Dorsolateral prefrontal cortex (tissue), 120 donors: ENCODE measurements at regions of chr14 and their contacts with region 1.

Region 1: DNA sequence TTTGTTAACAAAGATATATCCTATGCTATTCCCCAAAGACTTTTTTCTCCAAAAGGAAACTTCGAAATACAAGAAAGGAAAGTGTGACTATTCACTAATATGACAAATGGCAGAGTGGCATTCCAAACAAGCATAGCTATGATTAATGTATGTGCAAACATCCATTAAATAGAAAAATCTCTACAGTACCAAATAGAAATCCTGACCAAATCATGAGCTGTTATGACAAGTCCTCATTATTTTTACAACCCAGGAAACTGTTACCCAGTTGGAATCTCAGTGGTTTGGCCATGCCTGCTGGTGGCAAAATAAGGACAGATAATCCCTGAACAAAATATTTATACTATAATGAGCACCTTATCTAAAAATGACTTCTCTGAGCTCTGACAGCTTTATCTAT is 202.1 kb downstream of the SEC23A start:
- DNase-seq: no peak
- H3K4me3 ChIP-seq: no peak overlapping the region
- H3K27ac ChIP-seq: no peak overlapping the region
- H3K27me3 ChIP-seq: no peaks in the 10 kb centered on the region
- CTCF ChIP-seq: no peak

Region 2: GRCh38 chr14:38931969-38932652 is 31.2 kb after region 1 on chr14:
- intact Hi-C with region 1: loop called in 1 of 2 experiments (anchors 5 kb)
- DNase-seq: no peak
- H3K4me3 ChIP-seq: no peak overlapping the region
- H3K27ac ChIP-seq: peak overlapping the region in 21 of 59 donors; percentile 11 to 61 (median 32)
- H3K27me3 ChIP-seq: no peaks in the 10 kb centered on the region
- CTCF ChIP-seq: no peak